ENCODE measurements at regions of chr17 and their contacts with region 1.

Region 1: DNA sequence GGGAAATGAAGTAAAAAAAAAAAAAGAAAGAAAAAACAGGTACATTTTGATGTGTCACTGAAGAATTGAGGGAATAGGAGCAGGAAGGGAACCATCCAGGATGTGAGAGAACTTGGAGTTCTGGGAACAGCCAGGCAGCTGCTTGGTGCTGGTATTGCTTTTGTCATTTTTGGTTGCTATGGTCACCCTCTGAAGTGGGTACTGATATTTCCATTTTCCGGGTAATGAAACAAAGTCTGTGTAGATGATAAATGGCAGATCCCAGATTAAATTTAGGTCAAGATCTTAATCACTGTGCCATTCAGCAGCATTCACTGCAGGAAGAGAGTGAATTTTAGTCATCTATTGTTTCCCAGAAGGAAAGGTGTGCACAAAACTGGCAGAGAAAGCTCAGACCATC is 93.6 kb downstream of the ABCA8 start:
- DNase-seq: peak; percentile 67
- H3K4me3 ChIP-seq: no peak overlapping the region
- H3K27ac ChIP-seq: peak overlapping the region; percentile 45
- H3K4me1 ChIP-seq: peaks cover 10% of the 10 kb centered on the region
- H3K27me3 ChIP-seq: no peaks in the 10 kb centered on the region
- CTCF ChIP-seq: no peak
- POLR2A ChIP-seq: no peak

Region 2: GRCh38 chr17:68821860-68822696 is 39.5 kb before region 1 on chr17:
- CTCF ChIA-PET with region 1: no interaction called
- POLR2A ChIA-PET with region 1: no interaction called
- dilution Hi-C with region 1: no loop called
- intact Hi-C with region 1: loop called (anchors 2 kb)
- DNase-seq: peak; percentile 91
- H3K4me3 ChIP-seq: peak overlapping the region in 1 of 3 experiments; percentile 4
- H3K27ac ChIP-seq: peak overlapping the region; percentile 74
- H3K4me1 ChIP-seq: peaks cover 22% of the 10 kb centered on the region
- H3K27me3 ChIP-seq: no peaks in the 10 kb centered on the region
- CTCF ChIP-seq: no peak
- POLR2A ChIP-seq: no peak